ENCODE measurements at regions of chr1 and their contacts with region 1.

Region 1: GRCh38 chr1:2194898-2195673 is 514 bp upstream of the FAAP20 start:
- DNase-seq: peak; percentile 88 to 97 (median 90)
- ATAC-seq: peak; percentile 77
- H3K4me3 ChIP-seq: peak overlapping the region; percentile 47 to 70
- H3K27ac ChIP-seq: peak overlapping the region; percentile 91 to 94
- H3K4me1 ChIP-seq: peaks cover 31 to 66% of the 10 kb centered on the region in 2 donors
- H3K27me3 ChIP-seq: no peaks in the 10 kb centered on the region
- CTCF ChIP-seq: peak; percentile 91 to 92

Region 2: DNA sequence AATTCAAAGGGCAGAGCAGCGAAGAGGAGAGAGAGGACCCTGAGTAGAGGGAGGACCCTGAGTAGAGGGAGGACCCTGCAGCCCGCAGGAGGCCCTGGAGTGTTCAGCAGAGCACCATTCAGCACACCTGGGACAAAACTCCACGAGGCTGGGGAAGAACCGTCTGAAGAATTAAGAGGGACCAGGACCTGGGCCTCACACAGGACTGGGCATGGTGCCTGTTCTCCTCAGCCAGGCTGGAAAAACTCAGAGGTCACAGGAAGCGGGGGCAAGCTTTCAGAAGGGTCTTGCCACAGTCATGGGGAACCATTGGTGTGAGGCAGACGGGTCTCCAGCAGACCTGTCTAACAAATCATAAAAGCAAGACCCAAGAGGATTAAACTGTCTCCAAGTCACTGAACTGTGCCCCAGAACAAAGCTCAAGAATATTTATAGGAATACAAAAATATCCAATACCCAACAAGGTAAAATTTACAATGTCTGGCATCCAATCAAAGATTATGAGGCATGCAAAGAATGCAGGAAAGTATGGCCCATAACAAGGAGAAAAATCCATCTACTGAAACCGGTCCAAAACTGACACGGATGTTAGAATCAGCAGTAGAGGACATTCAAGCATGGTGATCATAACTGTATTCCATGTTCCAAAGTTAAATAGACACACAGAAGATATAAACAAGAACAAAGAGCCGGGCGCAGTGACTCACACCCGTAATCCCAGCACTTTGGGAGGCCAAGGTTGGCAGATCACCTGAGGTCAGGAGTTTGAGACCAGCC is 165.7 kb after region 1 on chr1:
- intact Hi-C with region 1: no loop called
- DNase-seq: no peak
- ATAC-seq: no peak
- H3K4me3 ChIP-seq: no peak overlapping the region
- H3K27ac ChIP-seq: no peak overlapping the region
- H3K4me1 ChIP-seq: no peaks in the 10 kb centered on the region
- H3K27me3 ChIP-seq: no peaks in the 10 kb centered on the region
- CTCF ChIP-seq: no peak

Region 3: GRCh38 chr1:2381741-2382620 is 186.9 kb after region 1 on chr1:
- intact Hi-C with region 1: loop called (anchors 2 to 10 kb)
- DNase-seq: peak; percentile 69 to 97 (median 86)
- ATAC-seq: peak; percentile 98
- H3K4me3 ChIP-seq: no peak overlapping the region
- H3K27ac ChIP-seq: no peak overlapping the region
- H3K4me1 ChIP-seq: peaks cover 4 to 6% of the 10 kb centered on the region in 2 donors
- H3K27me3 ChIP-seq: no peaks in the 10 kb centered on the region
- CTCF ChIP-seq: peak; percentile 87 to 95

Region 4: GRCh38 chr1:2525920-2526823 is 331.1 kb after region 1 on chr1 and contains the start of gene PANK4:
- intact Hi-C with region 1: no loop called
- DNase-seq: peak; percentile 87 to 98 (median 94)
- ATAC-seq: peak; percentile 95
- H3K4me3 ChIP-seq: peak within 1 kb of the TSS; percentile 58 to 97
- H3K27ac ChIP-seq: peak within 1 kb of the TSS; percentile 65 to 83
- H3K4me1 ChIP-seq: peaks cover 36 to 69% of the 10 kb centered on the region in 2 donors
- H3K27me3 ChIP-seq: peaks cover 13 to 43% of the 10 kb centered on the region in 2 donors
- CTCF ChIP-seq: no peak
- polyA plus RNA-seq, gene PANK4: 23.2 to 30.9 (median 26.6) TPM